Right ventricle myocardium superior (tissue), 1 donor: ENCODE measurements at regions of chr14 and their contacts with region 1.

Region 1: GRCh38 chr14:24734878-24735500 is 101.0 kb upstream of the GZMB start:
- DNase-seq: no peak
- ATAC-seq: peak; percentile 78

Region 2: GRCh38 chr14:24789378-24789884 is 54.4 kb after region 1 on chr14:
- intact Hi-C with region 1: loop called (anchors 10 kb)
- DNase-seq: no peak
- ATAC-seq: peak; percentile 53

Region 3: GRCh38 chr14:24817212-24818057 is 82.4 kb after region 1 on chr14:
- intact Hi-C with region 1: no loop called
- DNase-seq: no peak
- ATAC-seq: peak; percentile 58

Region 4: DNA sequence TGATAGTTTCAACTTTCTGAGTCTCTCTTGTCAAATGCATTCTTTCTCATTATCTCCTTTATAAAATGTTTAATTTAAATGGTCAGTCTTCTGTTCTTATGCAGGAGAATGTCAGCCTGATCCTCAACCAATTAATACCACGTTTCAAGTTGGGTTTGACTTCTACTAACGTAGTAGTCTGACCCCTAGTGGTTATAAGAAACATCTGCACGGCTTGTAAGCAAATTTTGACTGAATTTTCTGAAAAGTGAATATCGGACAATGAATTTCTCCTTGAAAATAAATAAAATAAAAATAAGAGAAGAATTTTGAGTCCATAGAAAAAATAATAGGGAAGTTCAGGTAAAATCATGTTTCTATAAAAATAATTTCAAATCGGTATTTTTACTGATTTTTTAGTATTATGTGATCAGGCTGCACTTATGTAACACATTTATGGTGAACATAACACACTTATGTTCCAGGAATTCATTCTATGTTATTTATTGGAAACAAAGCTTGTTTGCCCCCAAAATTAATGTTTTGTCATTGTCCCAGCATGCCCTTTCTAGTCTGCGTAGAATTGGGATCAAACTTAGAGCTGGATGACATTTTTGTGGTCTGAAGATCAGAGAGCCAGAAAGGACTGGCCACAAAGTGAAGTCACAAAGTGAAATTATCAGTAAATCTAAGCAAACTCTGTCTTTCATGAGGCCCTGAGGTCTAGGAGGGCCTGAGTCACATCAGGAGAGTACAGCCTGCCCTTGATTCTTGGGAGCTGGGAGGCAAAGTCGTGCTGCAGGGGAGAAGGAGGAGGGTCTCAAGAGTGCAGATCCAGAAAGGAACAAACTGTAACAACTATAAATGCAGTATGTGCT is 416.2 kb after region 1 on chr14:
- intact Hi-C with region 1: loop called (anchors 5 kb)
- DNase-seq: no peak
- ATAC-seq: peak; percentile 66